H1 (cell line): ENCODE measurements at regions of chr17 and their contacts with region 1.

Region 1: GRCh38 chr17:44199553-44200477 is at the start of gene ATXN7L3:
- DNase-seq: peak; percentile 92 to 97
- H3K4me3 ChIP-seq: peak within 1 kb of the TSS; percentile 77 to 98 (median 82)
- H3K27ac ChIP-seq: peak within 1 kb of the TSS; percentile 66
- H3K4me1 ChIP-seq: peaks cover 3 to 23% (median 8%) of the 10 kb centered on the region in 4 experiments
- H3K27me3 ChIP-seq: no peaks in the 10 kb centered on the region
- CTCF ChIP-seq: no peak
- EP300 ChIP-seq: no peak
- POLR2A ChIP-seq: peak; percentile 25 to 46; a peak in 2 of 3 replicates
- RAD21 ChIP-seq: no peak
- total RNA-seq, gene ATXN7L3: 103 and 106 TPM in 2 replicates

Region 2: GRCh38 chr17:44186307-44187130 is 13.3 kb before region 1 on chr17 and contains the start of gene TMUB2:
- CTCF ChIA-PET with region 1: interaction called, 10 read pairs
- POLR2A ChIA-PET with region 1: interaction called, 32 read pairs
- DNase-seq: peak; percentile 98 to 99
- H3K4me3 ChIP-seq: peak within 1 kb of the TSS; percentile 93 to 99 (median 98)
- H3K27ac ChIP-seq: peak within 1 kb of the TSS; percentile 91
- H3K4me1 ChIP-seq: peaks cover 0 to 4% (median 0%) of the 10 kb centered on the region in 4 experiments; a peak in 2 of 7 replicates
- H3K27me3 ChIP-seq: no peaks in the 10 kb centered on the region
- CTCF ChIP-seq: 0 out of 4 replicates have a peak, but pooled peaks of 1 of the 3 experiments have one; percentile 0
- EP300 ChIP-seq: no peak
- POLR2A ChIP-seq: peak; percentile 84 to 96
- RAD21 ChIP-seq: no peak
- total RNA-seq, gene TMUB2: 15.7 and 18.5 TPM in 2 replicates

Region 3: DNA sequence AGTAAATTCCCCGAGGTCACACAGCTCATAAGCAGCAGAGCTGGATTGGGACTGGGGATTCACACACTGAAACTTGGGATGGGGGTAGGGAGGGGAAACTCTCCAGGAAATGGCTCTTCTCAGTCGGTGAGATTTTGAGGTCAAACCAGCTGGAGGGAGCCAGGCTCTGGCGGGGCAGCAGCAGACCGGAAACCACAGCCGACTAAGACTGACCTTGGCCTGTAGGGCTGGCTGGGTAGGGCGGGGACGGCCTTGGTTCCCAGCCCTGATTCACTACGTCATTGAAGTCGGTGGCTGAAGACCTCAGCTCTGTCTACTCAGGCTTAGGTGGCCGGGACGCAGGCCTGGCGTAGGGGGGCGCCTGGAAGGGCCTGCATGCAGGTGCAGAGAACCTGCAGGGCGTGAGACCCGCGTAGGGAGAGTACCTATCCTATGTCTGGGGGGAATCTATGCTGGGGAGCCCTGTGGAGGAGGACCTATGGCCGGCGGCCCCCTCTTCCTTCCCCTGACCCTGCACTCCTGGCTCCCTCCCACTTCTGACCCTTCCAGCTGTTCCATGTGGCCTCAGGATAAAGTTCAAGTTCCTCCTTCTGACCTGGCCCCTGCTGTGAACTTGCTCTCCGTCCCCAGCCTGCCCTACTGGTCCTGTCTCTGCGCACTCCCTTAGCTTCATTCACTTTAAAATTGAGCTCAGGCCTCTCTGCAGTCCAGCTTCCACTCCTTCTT is 80.0 kb after region 1 on chr17:
- CTCF ChIA-PET with region 1: no interaction called
- POLR2A ChIA-PET with region 1: no interaction called
- DNase-seq: peak; percentile 19 to 74
- H3K4me3 ChIP-seq: no peak overlapping the region
- H3K27ac ChIP-seq: no peak overlapping the region
- H3K4me1 ChIP-seq: peaks cover 0 to 12% (median 7%) of the 10 kb centered on the region in 4 experiments; a peak in 6 of 7 replicates
- H3K27me3 ChIP-seq: 0 out of 7 replicates have a peak, but pooled peaks cover 0 to 2% (median 0%) of the 10 kb centered on the region in 4 experiments
- CTCF ChIP-seq: no peak
- EP300 ChIP-seq: no peak
- POLR2A ChIP-seq: no peak
- RAD21 ChIP-seq: 0 out of 4 replicates have a peak, but pooled peaks of 1 of the 2 experiments have one; percentile 2

Region 4: GRCh38 chr17:44314869-44315661 is 115.2 kb after region 1 on chr17:
- CTCF ChIA-PET with region 1: interaction called, 16 read pairs
- POLR2A ChIA-PET with region 1: interaction called, 9 read pairs
- DNase-seq: peak in 1 of 2 experiments; percentile 81
- H3K4me3 ChIP-seq: peak overlapping the region; percentile 40 to 67 (median 60)
- H3K27ac ChIP-seq: no peak overlapping the region
- H3K4me1 ChIP-seq: peaks cover 7 to 36% (median 29%) of the 10 kb centered on the region in 4 experiments
- H3K27me3 ChIP-seq: peaks cover 0 to 19% (median 17%) of the 10 kb centered on the region in 4 experiments; a peak in 6 of 7 replicates
- CTCF ChIP-seq: no peak
- EP300 ChIP-seq: no peak
- POLR2A ChIP-seq: no peak
- RAD21 ChIP-seq: no peak

Region 5: GRCh38 chr17:44350733-44351226 is 151.0 kb after region 1 on chr17:
- CTCF ChIA-PET with region 1: interaction called, 31 read pairs
- POLR2A ChIA-PET with region 1: interaction called, 11 read pairs
- DNase-seq: peak in 1 of 2 experiments; percentile 90
- H3K4me3 ChIP-seq: no peak overlapping the region
- H3K27ac ChIP-seq: no peak overlapping the region
- H3K4me1 ChIP-seq: peaks cover 0 to 8% (median 4%) of the 10 kb centered on the region in 4 experiments; a peak in 4 of 7 replicates
- H3K27me3 ChIP-seq: no peaks in the 10 kb centered on the region; a peak in 2 of 7 replicates
- CTCF ChIP-seq: peak; percentile 82 to 95 (median 90)
- EP300 ChIP-seq: no peak
- POLR2A ChIP-seq: no peak
- RAD21 ChIP-seq: peak; percentile 81 to 82